T-cell (primary cell): ENCODE measurements at regions of chr1 and their contacts with region 1.

Region 1: DNA sequence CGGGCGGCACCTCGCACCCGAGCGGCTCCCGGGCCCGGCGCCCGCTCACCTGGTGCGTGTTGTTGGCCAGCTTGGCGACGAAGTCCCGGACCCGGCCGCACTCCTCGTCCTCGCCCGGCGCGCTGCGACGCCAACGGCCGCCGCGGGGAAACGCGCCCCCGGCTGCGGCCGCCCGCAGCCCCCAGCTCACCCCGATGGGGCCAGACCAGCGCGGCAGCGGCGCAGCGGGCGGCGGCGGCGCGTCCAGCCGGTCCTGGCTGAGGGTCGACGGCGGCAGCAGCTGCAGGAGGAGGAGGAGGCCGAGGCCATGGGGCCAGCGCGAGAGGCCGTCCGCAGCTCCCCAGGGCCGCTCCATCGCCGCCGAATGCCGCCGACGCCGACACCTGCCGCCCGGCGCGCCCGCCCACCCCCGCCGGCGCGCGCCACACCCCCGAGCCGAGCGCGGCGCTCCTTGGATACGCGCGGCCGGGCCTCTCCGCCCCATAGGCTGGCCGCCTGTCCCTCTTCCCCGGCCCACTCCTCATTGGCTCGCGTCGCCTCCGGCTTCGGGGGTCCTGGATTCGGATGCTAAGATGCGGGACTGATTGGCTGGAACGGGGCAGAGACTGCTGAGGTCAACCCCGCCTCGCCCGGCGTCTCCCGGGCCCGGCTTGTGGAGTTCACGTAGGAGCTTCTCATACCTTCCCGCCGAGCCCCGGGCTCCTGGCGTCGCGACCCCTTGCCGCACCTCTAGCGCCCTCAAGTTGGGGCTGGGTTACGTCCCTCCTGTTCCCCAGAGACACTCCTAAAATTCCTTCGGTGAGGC is at the start of gene SORT1:
- DNase-seq: peak; percentile 12 to 71 (median 45)
- ATAC-seq: peak; percentile 91 to 99 (median 94)
- H3K4me3 ChIP-seq: peak within 1 kb of the TSS; percentile 37 to 61
- H3K4me3 Mint-ChIP-seq: peak within 1 kb of the TSS; percentile 78 to 86 (median 80)
- H3K27ac ChIP-seq: no peak within 1 kb of the TSS
- H3K27ac Mint-ChIP-seq: no peak within 1 kb of the TSS
- H3K4me1 ChIP-seq: peaks cover 7 to 14% of the 10 kb centered on the region in 2 experiments
- H3K4me1 Mint-ChIP-seq: peaks cover 11 to 21% (median 20%) of the 10 kb centered on the region in 3 donors
- H3K27me3 ChIP-seq: peaks cover 0 to 27% of the 10 kb centered on the region in 2 experiments
- H3K27me3 Mint-ChIP-seq: peaks cover 34 to 44% of the 10 kb centered on the region in 2 donors
- total RNA-seq, gene SORT1: 0.82 to 2.9 (median 1.5) TPM

Region 2: DNA sequence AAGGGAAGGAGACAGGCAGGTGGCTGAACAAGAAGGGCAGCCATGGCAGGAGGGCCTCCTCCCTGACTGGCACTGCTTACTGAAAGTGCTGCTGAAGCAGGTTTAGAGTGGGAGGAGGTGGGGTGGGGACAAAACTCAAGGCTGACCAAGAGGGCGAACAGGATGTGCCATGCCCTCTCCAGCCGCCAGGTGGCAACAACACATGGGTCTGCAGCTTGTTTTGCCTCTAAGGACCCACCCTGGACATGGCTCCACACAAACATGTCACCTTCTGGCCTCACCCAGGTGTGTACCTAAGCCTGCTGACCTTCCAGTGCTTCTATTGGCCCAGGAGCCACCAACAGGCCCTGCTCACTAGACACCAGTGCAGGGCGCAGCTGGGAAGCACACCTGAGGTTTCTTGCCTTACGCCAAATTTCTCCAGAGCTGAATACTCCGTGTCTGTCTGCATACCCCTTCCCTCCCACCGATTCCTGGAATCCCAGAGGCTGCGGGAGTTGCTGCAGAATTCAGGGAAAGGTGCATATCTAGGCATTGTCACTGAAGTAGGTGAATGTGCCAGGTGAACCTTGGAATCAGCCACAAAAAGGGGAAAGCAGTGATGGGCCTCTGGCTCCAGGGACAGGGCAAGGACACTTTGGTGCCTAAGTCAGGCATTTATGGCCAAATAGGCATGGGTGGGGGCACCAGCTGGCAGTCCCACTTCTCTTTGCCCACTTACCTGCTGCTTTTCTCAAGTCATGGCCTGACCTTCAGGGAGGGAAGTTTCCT is 120.1 kb before region 1 on chr1:
- CTCF ChIA-PET with region 1: interaction called, 6 to 40 read pairs
- POLR2A ChIA-PET with region 1: no interaction called
- DNase-seq: peak in 30 of 35 experiments; percentile 8 to 72 (median 40)
- ATAC-seq: peak; percentile 50 to 78 (median 70)
- H3K4me3 ChIP-seq: no peak overlapping the region
- H3K4me3 Mint-ChIP-seq: no peak overlapping the region
- H3K27ac ChIP-seq: no peak overlapping the region
- H3K27ac Mint-ChIP-seq: no peak overlapping the region
- H3K4me1 ChIP-seq: peaks cover under 1 to 15% of the 10 kb centered on the region in 2 experiments
- H3K4me1 Mint-ChIP-seq: peaks cover 9 to 15% (median 9%) of the 10 kb centered on the region in 3 donors
- H3K27me3 ChIP-seq: peaks cover 0 to 6% of the 10 kb centered on the region in 2 experiments
- H3K27me3 Mint-ChIP-seq: peaks cover 0 to 3% of the 10 kb centered on the region in 2 donors

Region 3: GRCh38 chr1:109282952-109283747 is 114.6 kb before region 1 on chr1 and contains the start of gene PSRC1:
- CTCF ChIA-PET with region 1: interaction called, 5 to 40 read pairs
- POLR2A ChIA-PET with region 1: interaction called in 1 of 2 experiments, 8 read pairs
- DNase-seq: peak; percentile 69 to 94 (median 83)
- ATAC-seq: peak; percentile 96 to 98 (median 96)
- H3K4me3 ChIP-seq: peak within 1 kb of the TSS; percentile 82 to 88
- H3K4me3 Mint-ChIP-seq: peak within 1 kb of the TSS; percentile 92 to 97 (median 94)
- H3K27ac ChIP-seq: peak within 1 kb of the TSS; percentile 56
- H3K27ac Mint-ChIP-seq: peak within 1 kb of the TSS; percentile 86 to 91
- H3K4me1 ChIP-seq: peaks cover 6 to 23% of the 10 kb centered on the region in 2 experiments
- H3K4me1 Mint-ChIP-seq: peaks cover 18 to 21% (median 18%) of the 10 kb centered on the region in 3 donors
- H3K27me3 ChIP-seq: peaks cover 0 to 2% of the 10 kb centered on the region in 2 experiments
- H3K27me3 Mint-ChIP-seq: no peaks in the 10 kb centered on the region
- total RNA-seq, gene PSRC1: 0.35 to 1.6 (median 0.72) TPM

Region 4: GRCh38 chr1:109319114-109319513 is 78.6 kb before region 1 on chr1:
- CTCF ChIA-PET with region 1: no interaction called
- POLR2A ChIA-PET with region 1: no interaction called
- DNase-seq: no peak
- ATAC-seq: no peak
- H3K4me3 ChIP-seq: no peak overlapping the region
- H3K4me3 Mint-ChIP-seq: no peak overlapping the region
- H3K27ac ChIP-seq: no peak overlapping the region
- H3K27ac Mint-ChIP-seq: no peak overlapping the region
- H3K4me1 ChIP-seq: no peaks in the 10 kb centered on the region
- H3K4me1 Mint-ChIP-seq: no peaks in the 10 kb centered on the region
- H3K27me3 ChIP-seq: peaks cover 0 to 5% of the 10 kb centered on the region in 2 experiments
- H3K27me3 Mint-ChIP-seq: no peaks in the 10 kb centered on the region

Region 5: GRCh38 chr1:109361649-109362048 is 36.1 kb before region 1 on chr1:
- CTCF ChIA-PET with region 1: interaction called in 1 of 2 experiments, 10 read pairs
- POLR2A ChIA-PET with region 1: no interaction called
- DNase-seq: no peak
- ATAC-seq: no peak
- H3K4me3 ChIP-seq: no peak overlapping the region
- H3K4me3 Mint-ChIP-seq: no peak overlapping the region
- H3K27ac ChIP-seq: no peak overlapping the region
- H3K27ac Mint-ChIP-seq: no peak overlapping the region
- H3K4me1 ChIP-seq: no peaks in the 10 kb centered on the region
- H3K4me1 Mint-ChIP-seq: no peaks in the 10 kb centered on the region
- H3K27me3 ChIP-seq: peaks cover 0 to 5% of the 10 kb centered on the region in 2 experiments
- H3K27me3 Mint-ChIP-seq: peaks cover 10 to 16% of the 10 kb centered on the region in 2 donors

Region 6: DNA sequence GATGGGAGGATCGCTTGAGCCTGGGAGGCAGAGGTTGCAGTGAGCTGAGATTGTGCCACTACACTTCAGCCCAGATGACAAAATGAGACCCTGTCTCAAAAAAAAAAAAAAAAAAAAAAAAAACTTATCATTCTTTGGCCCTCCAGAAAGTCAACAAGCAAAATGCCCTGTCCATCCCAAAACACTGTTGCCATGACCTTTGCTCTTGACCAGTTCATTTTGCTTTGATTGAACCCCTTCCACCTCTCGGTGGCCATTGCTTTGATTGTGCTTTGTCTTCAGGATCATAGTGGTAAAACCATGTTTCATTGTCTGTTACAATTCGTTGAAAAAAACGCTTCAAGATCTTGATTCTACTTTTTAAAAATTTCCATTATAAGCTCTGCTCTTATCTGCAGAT is 60.1 kb after region 1 on chr1:
- CTCF ChIA-PET with region 1: no interaction called
- POLR2A ChIA-PET with region 1: no interaction called
- DNase-seq: no peak
- ATAC-seq: no peak
- H3K4me3 ChIP-seq: no peak overlapping the region
- H3K4me3 Mint-ChIP-seq: no peak overlapping the region
- H3K27ac ChIP-seq: no peak overlapping the region
- H3K27ac Mint-ChIP-seq: peak overlapping the region in 1 of 2 donors; percentile 69
- H3K4me1 ChIP-seq: no peaks in the 10 kb centered on the region
- H3K4me1 Mint-ChIP-seq: no peaks in the 10 kb centered on the region
- H3K27me3 ChIP-seq: peaks cover 0 to 32% of the 10 kb centered on the region in 2 experiments
- H3K27me3 Mint-ChIP-seq: peaks cover 18 to 39% of the 10 kb centered on the region in 2 donors

Region 7: GRCh38 chr1:109493805-109494539 is 96.2 kb after region 1 on chr1 and contains the start of gene CYB561D1:
- CTCF ChIA-PET with region 1: no interaction called
- POLR2A ChIA-PET with region 1: no interaction called
- DNase-seq: peak; percentile 75 to 93 (median 86)
- ATAC-seq: peak; percentile 89 to 95 (median 92)
- H3K4me3 ChIP-seq: peak within 1 kb of the TSS; percentile 85 to 91
- H3K4me3 Mint-ChIP-seq: peak within 1 kb of the TSS; percentile 90 to 96 (median 94)
- H3K27ac ChIP-seq: no peak within 1 kb of the TSS
- H3K27ac Mint-ChIP-seq: peak within 1 kb of the TSS; percentile 79 to 97
- H3K4me1 ChIP-seq: peaks cover 27 to 68% of the 10 kb centered on the region in 2 experiments
- H3K4me1 Mint-ChIP-seq: peaks cover 48 to 59% (median 59%) of the 10 kb centered on the region in 3 donors
- H3K27me3 ChIP-seq: no peaks in the 10 kb centered on the region
- H3K27me3 Mint-ChIP-seq: no peaks in the 10 kb centered on the region
- total RNA-seq, gene CYB561D1: 23.6 to 42.6 (median 39.5) TPM

Region 8: GRCh38 chr1:110087812-110088738 is 690.3 kb after region 1 on chr1:
- CTCF ChIA-PET with region 1: no interaction called
- POLR2A ChIA-PET with region 1: no interaction called
- DNase-seq: peak in 20 of 35 experiments; percentile 13 to 66 (median 28)
- ATAC-seq: peak; percentile 56 to 71 (median 61)
- H3K4me3 ChIP-seq: no peak overlapping the region
- H3K4me3 Mint-ChIP-seq: no peak overlapping the region
- H3K27ac ChIP-seq: no peak overlapping the region
- H3K27ac Mint-ChIP-seq: no peak overlapping the region
- H3K4me1 ChIP-seq: peaks cover 2 to 17% of the 10 kb centered on the region in 2 experiments
- H3K4me1 Mint-ChIP-seq: peaks cover 10 to 13% (median 12%) of the 10 kb centered on the region in 3 donors
- H3K27me3 ChIP-seq: peaks cover 11 to 59% of the 10 kb centered on the region in 2 experiments
- H3K27me3 Mint-ChIP-seq: peaks cover 58 to 59% of the 10 kb centered on the region in 2 donors